Sciatic nerve (tissue), 2 donors: ENCODE measurements at regions of chr1 and their contacts with region 1.

Region 1: GRCh38 chr1:162177126-162177525 is 107.6 kb downstream of the NOS1AP start:
- DNase-seq: no peak
- ATAC-seq: no peak

Region 2: GRCh38 chr1:161905269-161905884 is 271.7 kb before region 1 on chr1:
- intact Hi-C with region 1: loop called (anchors 10 kb)
- DNase-seq: no peak
- ATAC-seq: no peak